CD8-positive, alpha-beta memory T cell (primary cell): ENCODE measurements at regions of chr10 and their contacts with region 1.

Region 1: GRCh38 chr10:114470956-114471905 is 66.9 kb upstream of the AFAP1L2 start:
- DNase-seq: peak; percentile 39 to 77 (median 57)
- H3K4me3 ChIP-seq: no peak overlapping the region
- H3K4me3 Mint-ChIP-seq: no peak overlapping the region
- H3K27ac ChIP-seq: no peak overlapping the region
- H3K27ac Mint-ChIP-seq: peak overlapping the region in 4 of 8 donors; percentile 4 to 58 (median 20)
- H3K4me1 ChIP-seq: peaks cover 5% of the 10 kb centered on the region
- H3K4me1 Mint-ChIP-seq: peaks cover 5 to 34% (median 18%) of the 10 kb centered on the region in 3 donors
- H3K27me3 ChIP-seq: no peaks in the 10 kb centered on the region
- H3K27me3 Mint-ChIP-seq: no peaks in the 10 kb centered on the region

Region 2: GRCh38 chr10:114304017-114304570 is 167.1 kb before region 1 on chr10:
- CTCF ChIA-PET with region 1: interaction called, 18 read pairs
- POLR2A ChIA-PET with region 1: no interaction called
- DNase-seq: peak; percentile 35 to 71 (median 46)
- H3K4me3 ChIP-seq: peak overlapping the region; percentile 70
- H3K4me3 Mint-ChIP-seq: peak overlapping the region; percentile 89 to 95 (median 91)
- H3K27ac ChIP-seq: no peak overlapping the region
- H3K27ac Mint-ChIP-seq: peak overlapping the region in 7 of 8 donors; percentile 48 to 88 (median 70)
- H3K4me1 ChIP-seq: peaks cover 6% of the 10 kb centered on the region
- H3K4me1 Mint-ChIP-seq: peaks cover 10 to 13% (median 13%) of the 10 kb centered on the region in 3 donors
- H3K27me3 ChIP-seq: no peaks in the 10 kb centered on the region
- H3K27me3 Mint-ChIP-seq: no peaks in the 10 kb centered on the region

Region 3: GRCh38 chr10:114367041-114367818 is 104.0 kb before region 1 on chr10:
- CTCF ChIA-PET with region 1: no interaction called
- POLR2A ChIA-PET with region 1: no interaction called
- DNase-seq: no peak
- H3K4me3 ChIP-seq: no peak overlapping the region
- H3K4me3 Mint-ChIP-seq: no peak overlapping the region
- H3K27ac ChIP-seq: no peak overlapping the region
- H3K27ac Mint-ChIP-seq: no peak overlapping the region
- H3K4me1 ChIP-seq: no peaks in the 10 kb centered on the region
- H3K4me1 Mint-ChIP-seq: peaks cover 0 to 9% (median 0%) of the 10 kb centered on the region in 3 donors
- H3K27me3 ChIP-seq: no peaks in the 10 kb centered on the region
- H3K27me3 Mint-ChIP-seq: peaks cover 6 to 9% of the 10 kb centered on the region in 2 donors

Region 4: DNA sequence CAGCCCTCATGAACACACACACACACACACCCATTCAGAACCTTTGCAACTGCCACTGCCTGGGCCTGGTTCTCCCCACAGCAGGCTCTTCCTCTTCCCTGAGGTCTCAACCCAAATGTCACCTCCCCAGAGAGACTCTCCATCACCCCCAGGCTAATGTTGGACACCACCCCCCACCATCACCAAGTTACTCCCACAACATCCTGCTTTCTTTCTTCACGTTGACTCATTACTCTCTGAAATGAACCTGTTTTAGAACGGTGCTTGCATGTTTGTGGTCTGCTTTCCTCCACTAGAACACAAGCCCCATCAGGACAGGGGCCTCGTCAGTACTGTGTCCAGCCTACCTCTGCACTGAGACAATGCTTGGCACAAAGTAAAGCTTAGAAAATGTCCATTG is 83.0 kb before region 1 on chr10:
- CTCF ChIA-PET with region 1: no interaction called
- POLR2A ChIA-PET with region 1: no interaction called
- DNase-seq: no peak
- H3K4me3 ChIP-seq: no peak overlapping the region
- H3K4me3 Mint-ChIP-seq: peak overlapping the region in 1 of 7 donors; percentile 54
- H3K27ac ChIP-seq: no peak overlapping the region
- H3K27ac Mint-ChIP-seq: no peak overlapping the region
- H3K4me1 ChIP-seq: no peaks in the 10 kb centered on the region
- H3K4me1 Mint-ChIP-seq: no peaks in the 10 kb centered on the region
- H3K27me3 ChIP-seq: no peaks in the 10 kb centered on the region
- H3K27me3 Mint-ChIP-seq: peaks cover 10 to 40% of the 10 kb centered on the region in 2 donors

Region 5: DNA sequence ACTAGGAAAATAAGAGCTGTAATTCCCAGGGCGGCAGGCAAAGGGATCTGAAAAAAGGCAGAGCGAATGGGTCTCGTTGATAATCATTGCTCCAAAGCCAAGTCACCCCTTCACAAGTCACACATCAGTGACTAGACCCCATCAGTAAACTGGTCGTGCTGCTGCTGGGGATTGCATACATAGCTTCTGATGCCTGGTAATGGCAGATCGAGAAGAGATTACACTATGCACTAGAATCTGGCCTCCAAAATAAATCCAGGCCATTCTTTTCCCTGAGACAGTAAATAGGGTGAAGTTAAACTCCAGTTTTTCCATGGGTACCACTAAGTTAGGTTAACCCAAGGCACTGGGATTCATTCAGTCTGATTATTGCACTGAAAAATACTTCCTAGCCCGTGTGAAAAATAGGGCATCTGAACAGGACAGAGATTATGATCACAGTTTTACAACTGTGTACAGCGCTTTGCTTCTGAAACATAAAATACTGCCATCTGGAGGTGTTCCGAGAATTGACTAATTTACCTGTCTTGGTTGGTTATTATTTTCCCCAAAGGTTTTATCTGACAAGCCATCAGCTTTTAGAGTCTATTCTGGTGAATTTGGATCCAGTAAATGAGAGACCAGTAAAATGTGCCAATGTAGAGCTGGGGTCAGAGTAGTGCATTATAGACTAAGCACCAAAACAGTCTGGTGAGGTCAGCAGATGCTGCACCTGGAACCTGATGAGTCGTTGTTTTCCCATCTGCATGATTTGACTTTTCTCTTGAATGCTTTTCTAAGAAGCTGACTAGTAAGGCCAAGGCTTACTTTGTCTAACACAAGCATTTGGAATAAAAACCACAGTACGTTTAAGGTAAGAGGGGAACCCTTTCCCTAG is 15.9 kb after region 1 on chr10:
- CTCF ChIA-PET with region 1: interaction called, 18 read pairs
- POLR2A ChIA-PET with region 1: no interaction called
- DNase-seq: no peak
- H3K4me3 ChIP-seq: no peak overlapping the region
- H3K4me3 Mint-ChIP-seq: no peak overlapping the region
- H3K27ac ChIP-seq: no peak overlapping the region
- H3K27ac Mint-ChIP-seq: peak overlapping the region in 1 of 8 donors; percentile 50
- H3K4me1 ChIP-seq: peaks cover 11% of the 10 kb centered on the region
- H3K4me1 Mint-ChIP-seq: peaks cover 11 to 46% (median 26%) of the 10 kb centered on the region in 3 donors
- H3K27me3 ChIP-seq: no peaks in the 10 kb centered on the region
- H3K27me3 Mint-ChIP-seq: no peaks in the 10 kb centered on the region

Region 6: GRCh38 chr10:114526504-114527238 is 55.4 kb after region 1 on chr10:
- CTCF ChIA-PET with region 1: interaction called, 18 read pairs
- POLR2A ChIA-PET with region 1: no interaction called
- DNase-seq: peak; percentile 78 to 95 (median 93)
- H3K4me3 ChIP-seq: peak overlapping the region; percentile 71
- H3K4me3 Mint-ChIP-seq: peak overlapping the region; percentile 91 to 96 (median 92)
- H3K27ac ChIP-seq: peak overlapping the region; percentile 82
- H3K27ac Mint-ChIP-seq: peak overlapping the region; percentile 95 to 100 (median 98)
- H3K4me1 ChIP-seq: peaks cover 56% of the 10 kb centered on the region
- H3K4me1 Mint-ChIP-seq: peaks cover 53 to 63% (median 61%) of the 10 kb centered on the region in 3 donors
- H3K27me3 ChIP-seq: no peaks in the 10 kb centered on the region
- H3K27me3 Mint-ChIP-seq: peaks cover 0 to 4% of the 10 kb centered on the region in 2 donors

Region 7: DNA sequence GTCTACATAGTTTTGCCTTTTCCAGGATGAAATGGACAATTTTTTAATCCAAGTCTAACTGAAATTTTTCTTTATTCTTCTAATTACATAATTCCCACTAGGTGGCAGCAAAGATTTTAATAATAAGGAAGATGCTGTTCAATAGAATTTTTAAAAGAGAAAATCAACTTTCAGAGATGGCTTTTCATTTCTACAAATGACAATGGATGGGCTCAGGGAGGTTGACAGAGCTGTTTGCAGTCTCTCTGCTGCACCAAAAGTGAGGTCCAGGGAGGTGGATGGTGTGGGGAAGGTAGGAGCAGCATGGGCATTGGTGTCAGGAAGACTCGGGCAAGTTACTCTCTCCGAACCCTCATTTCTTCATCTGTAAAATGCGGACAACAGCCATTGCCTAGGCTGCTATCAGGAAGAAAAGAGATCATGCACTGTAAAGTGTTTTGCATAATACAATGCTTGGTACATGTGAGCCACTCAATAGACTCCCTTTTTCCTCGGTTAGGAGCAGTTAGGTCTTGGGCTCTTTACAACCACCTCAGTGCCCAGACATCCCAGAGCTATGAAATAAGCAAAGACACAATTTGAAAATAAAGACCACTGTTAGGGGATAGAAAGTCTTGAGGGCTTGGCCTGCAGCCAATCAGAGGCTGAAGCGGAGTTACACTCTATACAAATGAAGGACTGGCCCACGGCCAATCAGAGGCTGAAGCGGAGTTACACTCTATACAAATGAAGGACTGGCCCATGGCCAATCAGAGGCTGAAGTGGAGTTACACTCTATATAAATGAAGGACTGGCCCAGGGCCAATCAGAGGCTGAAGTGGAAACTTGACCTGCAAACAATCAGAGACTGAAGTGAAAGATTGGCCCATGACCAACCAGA is 79.8 kb after region 1 on chr10:
- CTCF ChIA-PET with region 1: interaction called, 106 read pairs
- POLR2A ChIA-PET with region 1: no interaction called
- DNase-seq: peak in 1 of 5 donors; percentile 39
- H3K4me3 ChIP-seq: no peak overlapping the region
- H3K4me3 Mint-ChIP-seq: no peak overlapping the region
- H3K27ac ChIP-seq: no peak overlapping the region
- H3K27ac Mint-ChIP-seq: peak overlapping the region in 5 of 8 donors; percentile 7 to 64 (median 42)
- H3K4me1 ChIP-seq: peaks cover 25% of the 10 kb centered on the region
- H3K4me1 Mint-ChIP-seq: peaks cover 14 to 33% (median 31%) of the 10 kb centered on the region in 3 donors
- H3K27me3 ChIP-seq: no peaks in the 10 kb centered on the region
- H3K27me3 Mint-ChIP-seq: peaks cover 0 to 3% of the 10 kb centered on the region in 2 donors

Region 8: GRCh38 chr10:114694752-114695151 is 223.5 kb after region 1 on chr10:
- CTCF ChIA-PET with region 1: interaction called, 12 read pairs
- POLR2A ChIA-PET with region 1: no interaction called
- DNase-seq: peak in 1 of 5 donors; percentile 10
- H3K4me3 ChIP-seq: no peak overlapping the region
- H3K4me3 Mint-ChIP-seq: no peak overlapping the region
- H3K27ac ChIP-seq: no peak overlapping the region
- H3K27ac Mint-ChIP-seq: no peak overlapping the region
- H3K4me1 ChIP-seq: peaks cover 14% of the 10 kb centered on the region
- H3K4me1 Mint-ChIP-seq: peaks cover 10 to 13% (median 12%) of the 10 kb centered on the region in 3 donors
- H3K27me3 ChIP-seq: no peaks in the 10 kb centered on the region
- H3K27me3 Mint-ChIP-seq: peaks cover 2 to 19% of the 10 kb centered on the region in 2 donors

Region 9: DNA sequence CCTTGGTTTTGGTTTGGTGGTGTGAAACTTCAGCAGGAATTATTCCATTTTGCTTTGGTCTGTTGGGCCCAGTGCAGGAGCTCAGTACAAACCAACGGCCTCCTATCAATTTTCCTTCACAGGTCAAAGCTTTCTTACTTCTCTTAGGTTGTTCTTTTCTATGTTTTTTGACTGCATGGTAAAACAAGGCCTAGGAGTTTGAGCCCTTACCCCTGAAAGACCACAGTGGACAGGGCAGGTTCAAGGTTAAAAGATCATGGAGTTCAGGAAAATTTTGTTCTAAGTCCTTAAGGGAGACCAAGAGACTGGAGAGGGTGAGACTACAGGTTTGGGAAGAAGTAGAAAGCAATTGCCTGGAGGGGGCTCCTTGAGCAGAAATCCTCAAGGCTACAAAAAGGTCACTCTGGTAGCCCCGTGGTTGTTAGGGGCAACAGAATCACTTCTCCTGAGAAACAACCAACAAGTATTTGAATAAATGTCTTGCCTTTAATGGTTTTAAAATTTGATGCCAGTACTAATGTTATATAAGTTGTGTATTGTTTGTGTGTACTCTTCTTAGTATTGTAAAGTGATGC is 309.5 kb after region 1 on chr10:
- CTCF ChIA-PET with region 1: interaction called, 20 read pairs
- POLR2A ChIA-PET with region 1: no interaction called
- DNase-seq: no peak
- H3K4me3 ChIP-seq: no peak overlapping the region
- H3K4me3 Mint-ChIP-seq: no peak overlapping the region
- H3K27ac ChIP-seq: no peak overlapping the region
- H3K27ac Mint-ChIP-seq: peak overlapping the region in 1 of 8 donors; percentile 76
- H3K4me1 ChIP-seq: no peaks in the 10 kb centered on the region
- H3K4me1 Mint-ChIP-seq: no peaks in the 10 kb centered on the region
- H3K27me3 ChIP-seq: no peaks in the 10 kb centered on the region
- H3K27me3 Mint-ChIP-seq: no peaks in the 10 kb centered on the region